ENCODE measurements at regions of chr19 and their contacts with region 1.

Region 1: GRCh38 chr19:1812469-1813196 is 557 bp upstream of the ATP8B3 start:
- DNase-seq: peak; percentile 94
- ATAC-seq: peak; percentile 90
- H3K4me3 Mint-ChIP-seq: peak overlapping the region; percentile 77
- H3K27ac Mint-ChIP-seq: peak overlapping the region; percentile 90
- H3K4me1 Mint-ChIP-seq: peaks cover 14% of the 10 kb centered on the region
- H3K27me3 Mint-ChIP-seq: no peaks in the 10 kb centered on the region

Region 2: DNA sequence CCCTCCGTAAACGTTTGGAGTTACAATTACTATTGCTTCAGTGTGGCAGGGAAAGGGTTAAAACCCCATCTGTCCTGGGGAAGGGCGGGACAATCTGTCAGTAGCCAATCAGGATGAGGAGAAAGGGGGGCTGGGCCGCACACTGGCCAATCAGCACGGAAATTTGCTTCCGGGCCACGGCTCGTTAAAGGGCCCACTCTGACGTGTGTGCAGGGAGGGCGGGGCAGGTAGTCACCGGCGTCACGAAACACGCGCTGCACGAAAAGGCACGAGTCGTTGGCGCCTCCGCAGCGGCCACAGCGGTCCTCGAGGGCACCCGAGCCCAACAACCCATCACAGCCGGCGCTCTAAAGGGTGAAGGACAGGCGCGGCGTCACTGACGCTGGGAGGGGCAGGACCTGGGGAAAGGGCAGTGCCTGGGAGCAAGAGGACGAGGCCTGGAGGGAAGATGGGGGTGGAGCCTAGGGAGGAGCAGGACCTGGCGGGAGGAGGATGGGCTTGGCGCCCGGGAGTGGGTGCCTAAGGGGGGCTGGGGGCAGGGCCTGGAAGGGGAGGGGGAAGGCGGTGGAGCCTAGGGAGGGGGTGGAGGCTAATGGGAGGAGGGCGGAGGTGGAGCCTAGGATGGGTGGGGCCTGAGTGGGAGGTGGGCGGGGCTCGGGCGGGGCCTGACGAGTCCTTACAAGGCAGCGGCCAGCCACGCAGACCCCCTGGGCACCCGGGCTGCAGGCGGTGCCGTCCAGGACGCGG is 304.7 kb before region 1 on chr19:
- CTCF ChIA-PET with region 1: no interaction called
- POLR2A ChIA-PET with region 1: no interaction called
- intact Hi-C with region 1: loop called in 1 of 2 experiments (anchors 1 kb)
- DNase-seq: peak; percentile 95
- ATAC-seq: peak; percentile 87
- H3K4me3 Mint-ChIP-seq: peak overlapping the region; percentile 73
- H3K27ac Mint-ChIP-seq: peak overlapping the region; percentile 88
- H3K4me1 Mint-ChIP-seq: peaks cover 16% of the 10 kb centered on the region
- H3K27me3 Mint-ChIP-seq: no peaks in the 10 kb centered on the region

Region 3: DNA sequence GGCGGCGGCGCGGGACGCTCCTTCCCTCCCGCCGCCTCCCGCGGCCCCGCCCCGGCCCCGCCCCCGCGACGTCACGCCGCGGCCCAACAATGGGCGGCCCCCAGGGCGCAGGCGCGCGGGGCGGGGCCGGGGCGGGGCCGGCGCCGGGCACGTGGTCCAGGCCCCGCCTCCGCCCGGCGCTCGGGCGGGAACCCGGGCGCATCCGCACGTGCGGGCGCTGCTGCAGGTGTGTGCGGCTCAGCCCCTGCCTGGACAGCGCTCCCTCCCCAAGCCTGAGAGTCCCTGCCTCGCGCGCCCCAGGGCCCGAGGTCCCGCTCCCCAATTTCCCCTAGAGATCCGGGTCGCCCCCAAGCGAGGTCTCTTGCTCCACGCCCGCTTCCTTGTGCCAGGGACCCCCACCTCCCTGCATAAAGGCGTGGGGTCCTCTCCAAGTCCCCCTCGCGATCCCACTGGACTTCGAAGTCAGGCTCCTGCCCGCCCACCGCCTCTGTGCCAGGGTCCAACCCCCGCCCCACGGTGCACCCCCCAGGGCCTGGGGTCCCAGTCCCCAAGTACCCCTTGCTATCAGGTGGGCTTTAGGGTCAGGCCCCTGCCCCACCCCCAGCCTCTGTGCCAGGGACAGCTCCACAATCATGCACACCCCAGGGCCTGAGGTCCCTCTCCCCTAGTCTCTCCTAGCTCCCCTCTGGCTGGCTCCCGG is 244.2 kb before region 1 on chr19 and contains the start of gene MEX3D:
- CTCF ChIA-PET with region 1: no interaction called
- POLR2A ChIA-PET with region 1: no interaction called
- intact Hi-C with region 1: loop called in 1 of 2 experiments (anchors 1 kb)
- DNase-seq: peak; percentile 90
- ATAC-seq: peak; percentile 88
- H3K4me3 Mint-ChIP-seq: no peak within 1 kb of the TSS
- H3K27ac Mint-ChIP-seq: no peak within 1 kb of the TSS
- H3K4me1 Mint-ChIP-seq: no peaks in the 10 kb centered on the region
- H3K27me3 Mint-ChIP-seq: peaks cover 7% of the 10 kb centered on the region
- total RNA-seq, gene MEX3D: 6.2 to 6.7 TPM

Region 4: DNA sequence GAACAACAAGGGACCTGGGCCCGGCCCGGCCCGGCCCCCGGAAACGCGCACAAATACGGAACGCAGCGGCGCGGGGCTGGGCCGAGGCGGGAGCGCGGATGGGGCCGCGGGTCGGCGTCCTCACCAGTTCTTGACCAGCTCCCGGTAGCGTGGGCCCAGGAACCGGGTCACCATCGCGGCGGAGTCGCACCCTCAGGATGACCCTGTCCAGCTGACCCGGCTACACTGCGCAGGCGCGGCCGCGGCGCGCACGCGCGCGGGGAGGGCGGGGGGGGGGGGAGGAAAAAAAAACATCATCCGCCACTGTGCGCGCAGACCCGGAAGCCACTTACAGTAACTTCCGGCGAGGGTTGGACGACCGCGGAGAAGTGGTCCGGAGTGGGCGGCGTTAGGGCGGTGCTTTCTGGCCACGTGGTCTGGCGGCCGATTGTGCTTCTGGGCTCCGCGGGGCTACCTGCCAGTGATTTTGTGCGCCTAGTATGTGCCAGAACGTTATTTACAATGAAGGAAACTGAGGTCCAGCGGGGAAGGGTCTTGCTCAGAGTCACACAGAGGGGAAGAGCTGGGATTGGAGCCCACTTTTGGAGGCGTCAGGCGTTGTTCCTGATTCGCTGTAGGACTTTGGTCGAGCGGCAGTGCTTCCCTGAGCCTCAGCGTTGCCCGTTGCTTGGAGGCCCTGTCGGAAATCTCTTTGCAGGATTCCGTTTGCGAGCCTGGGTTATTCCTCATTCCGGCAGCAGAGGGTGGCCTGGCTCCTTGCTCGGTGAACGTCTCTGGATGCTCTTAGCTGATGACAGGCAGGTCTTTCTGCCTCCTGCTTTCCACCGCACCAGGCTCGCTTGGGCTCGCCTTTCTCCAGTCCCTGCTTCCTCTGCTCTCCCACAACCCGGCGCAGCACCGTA is 207.1 kb before region 1 on chr19 and contains the start of gene UQCR11:
- CTCF ChIA-PET with region 1: no interaction called
- POLR2A ChIA-PET with region 1: no interaction called
- intact Hi-C with region 1: loop called in 1 of 2 experiments (anchors 1 kb)
- DNase-seq: peak; percentile 96
- ATAC-seq: peak; percentile 89
- H3K4me3 Mint-ChIP-seq: peak within 1 kb of the TSS; percentile 97
- H3K27ac Mint-ChIP-seq: peak within 1 kb of the TSS; percentile 99
- H3K4me1 Mint-ChIP-seq: peaks cover 52% of the 10 kb centered on the region
- H3K27me3 Mint-ChIP-seq: no peaks in the 10 kb centered on the region
- total RNA-seq, gene UQCR11: 152 to 226 TPM

Region 5: GRCh38 chr19:1672038-1672768 is 140.4 kb before region 1 on chr19:
- CTCF ChIA-PET with region 1: interaction called, 4 read pairs
- POLR2A ChIA-PET with region 1: no interaction called
- intact Hi-C with region 1: loop called in 1 of 2 experiments (anchors 1 kb)
- DNase-seq: peak; percentile 78
- ATAC-seq: peak; percentile 64
- H3K4me3 Mint-ChIP-seq: no peak overlapping the region
- H3K27ac Mint-ChIP-seq: no peak overlapping the region
- H3K4me1 Mint-ChIP-seq: peaks cover 13% of the 10 kb centered on the region
- H3K27me3 Mint-ChIP-seq: peaks cover 46% of the 10 kb centered on the region

Region 6: GRCh38 chr19:1848399-1849131 is 35.9 kb after region 1 on chr19 and contains the start of gene REXO1:
- CTCF ChIA-PET with region 1: no interaction called
- POLR2A ChIA-PET with region 1: no interaction called
- intact Hi-C with region 1: loop called in 1 of 2 experiments (anchors 1 kb)
- DNase-seq: peak; percentile 98
- ATAC-seq: peak; percentile 72
- H3K4me3 Mint-ChIP-seq: peak within 1 kb of the TSS; percentile 92
- H3K27ac Mint-ChIP-seq: peak within 1 kb of the TSS; percentile 88
- H3K4me1 Mint-ChIP-seq: peaks cover 65% of the 10 kb centered on the region
- H3K27me3 Mint-ChIP-seq: no peaks in the 10 kb centered on the region
- total RNA-seq, gene REXO1: 39.3 to 49.8 TPM

Region 7: GRCh38 chr19:1942078-1942933 is 129.7 kb after region 1 on chr19:
- CTCF ChIA-PET with region 1: no interaction called
- POLR2A ChIA-PET with region 1: no interaction called
- intact Hi-C with region 1: loop called in 1 of 2 experiments (anchors 1 kb)
- DNase-seq: peak; percentile 85
- ATAC-seq: peak; percentile 50
- H3K4me3 Mint-ChIP-seq: peak overlapping the region; percentile 93
- H3K27ac Mint-ChIP-seq: peak overlapping the region; percentile 88
- H3K4me1 Mint-ChIP-seq: peaks cover 30% of the 10 kb centered on the region
- H3K27me3 Mint-ChIP-seq: no peaks in the 10 kb centered on the region

Region 8: GRCh38 chr19:2315818-2316353 is 503.3 kb after region 1 on chr19:
- CTCF ChIA-PET with region 1: no interaction called
- POLR2A ChIA-PET with region 1: no interaction called
- intact Hi-C with region 1: no loop called
- DNase-seq: peak; percentile 49
- ATAC-seq: no peak
- H3K4me3 Mint-ChIP-seq: no peak overlapping the region
- H3K27ac Mint-ChIP-seq: no peak overlapping the region
- H3K4me1 Mint-ChIP-seq: no peaks in the 10 kb centered on the region
- H3K27me3 Mint-ChIP-seq: peaks cover 12% of the 10 kb centered on the region

Measured in activated CD4-positive, alpha-beta T cell treated with anti-CD3 and anti-CD28 coated beads for 36 hours (primary cell).